Mammary epithelial cell (primary cell): ENCODE measurements at regions of chr1 and their contacts with region 1.

Region 1: DNA sequence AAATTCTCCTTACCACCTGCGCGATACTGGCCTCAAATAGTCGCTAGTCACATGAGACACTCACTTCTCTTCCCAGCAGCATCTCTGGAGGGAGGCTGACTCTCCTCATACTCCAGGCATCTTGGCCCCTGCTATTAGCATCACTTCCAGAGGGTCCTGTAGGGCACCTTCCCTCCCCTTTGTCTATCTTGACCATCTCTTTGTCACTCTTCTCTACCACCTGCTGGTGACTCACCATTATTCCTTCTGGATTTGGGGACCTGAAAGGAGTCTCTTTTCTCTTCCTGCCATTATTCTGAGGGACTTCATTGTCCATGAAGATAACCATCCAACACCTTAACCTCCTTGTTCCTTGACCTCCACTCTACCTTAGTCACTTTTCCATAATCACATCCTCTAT is 31.7 kb upstream of the GPR37L1 start:
- DNase-seq: no peak
- H3K4me3 ChIP-seq: no peak overlapping the region
- H3K27ac ChIP-seq: no peak overlapping the region
- H3K4me1 ChIP-seq: no peaks in the 10 kb centered on the region
- H3K27me3 ChIP-seq: no peaks in the 10 kb centered on the region
- CTCF ChIP-seq: peak in 1 of 2 donors; percentile 26

Region 2: GRCh38 chr1:202034683-202035462 is 56.1 kb before region 1 on chr1:
- CTCF ChIA-PET with region 1: no interaction called
- dilution Hi-C with region 1: no loop called
- in situ Hi-C with region 1: no loop called
- intact Hi-C with region 1: no loop called
- DNase-seq: peak; percentile 99
- H3K4me3 ChIP-seq: no peak overlapping the region
- H3K27ac ChIP-seq: peak overlapping the region; percentile 74
- H3K4me1 ChIP-seq: peaks cover 17% of the 10 kb centered on the region
- H3K27me3 ChIP-seq: no peaks in the 10 kb centered on the region
- CTCF ChIP-seq: no peak

Region 3: DNA sequence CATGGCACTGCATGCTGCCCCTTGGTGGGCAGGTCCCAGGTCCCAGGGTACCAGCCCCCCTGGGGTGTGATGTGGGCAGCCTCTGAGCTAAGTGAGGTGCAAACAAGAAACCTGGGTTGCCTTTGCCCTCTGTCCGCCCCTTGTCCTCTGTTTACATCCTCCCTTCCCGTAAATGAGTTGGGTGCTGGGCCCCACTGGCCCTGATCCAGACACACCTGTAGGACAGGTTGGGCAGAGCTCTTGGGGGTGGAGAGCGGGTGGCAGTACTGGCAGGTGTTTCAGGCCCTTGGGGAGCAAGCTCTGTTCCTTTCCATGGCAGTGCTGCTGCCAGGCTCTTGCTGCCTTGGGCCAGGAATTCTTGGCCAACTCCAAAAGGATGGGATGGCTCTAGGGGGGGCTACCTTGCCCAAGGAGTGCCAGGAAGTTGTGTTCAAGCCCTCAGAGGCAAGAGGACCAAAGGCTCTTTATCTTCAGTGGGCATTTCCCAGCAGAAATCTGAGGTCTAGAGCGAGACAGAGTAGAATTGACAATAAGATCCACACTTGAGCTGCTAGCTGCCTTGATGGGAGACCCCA is 44.7 kb before region 1 on chr1:
- CTCF ChIA-PET with region 1: no interaction called
- dilution Hi-C with region 1: no loop called
- in situ Hi-C with region 1: no loop called
- intact Hi-C with region 1: no loop called
- DNase-seq: peak; percentile 26
- H3K4me3 ChIP-seq: no peak overlapping the region
- H3K27ac ChIP-seq: peak overlapping the region; percentile 30
- H3K4me1 ChIP-seq: peaks cover 16% of the 10 kb centered on the region
- H3K27me3 ChIP-seq: no peaks in the 10 kb centered on the region
- CTCF ChIP-seq: no peak

Region 4: DNA sequence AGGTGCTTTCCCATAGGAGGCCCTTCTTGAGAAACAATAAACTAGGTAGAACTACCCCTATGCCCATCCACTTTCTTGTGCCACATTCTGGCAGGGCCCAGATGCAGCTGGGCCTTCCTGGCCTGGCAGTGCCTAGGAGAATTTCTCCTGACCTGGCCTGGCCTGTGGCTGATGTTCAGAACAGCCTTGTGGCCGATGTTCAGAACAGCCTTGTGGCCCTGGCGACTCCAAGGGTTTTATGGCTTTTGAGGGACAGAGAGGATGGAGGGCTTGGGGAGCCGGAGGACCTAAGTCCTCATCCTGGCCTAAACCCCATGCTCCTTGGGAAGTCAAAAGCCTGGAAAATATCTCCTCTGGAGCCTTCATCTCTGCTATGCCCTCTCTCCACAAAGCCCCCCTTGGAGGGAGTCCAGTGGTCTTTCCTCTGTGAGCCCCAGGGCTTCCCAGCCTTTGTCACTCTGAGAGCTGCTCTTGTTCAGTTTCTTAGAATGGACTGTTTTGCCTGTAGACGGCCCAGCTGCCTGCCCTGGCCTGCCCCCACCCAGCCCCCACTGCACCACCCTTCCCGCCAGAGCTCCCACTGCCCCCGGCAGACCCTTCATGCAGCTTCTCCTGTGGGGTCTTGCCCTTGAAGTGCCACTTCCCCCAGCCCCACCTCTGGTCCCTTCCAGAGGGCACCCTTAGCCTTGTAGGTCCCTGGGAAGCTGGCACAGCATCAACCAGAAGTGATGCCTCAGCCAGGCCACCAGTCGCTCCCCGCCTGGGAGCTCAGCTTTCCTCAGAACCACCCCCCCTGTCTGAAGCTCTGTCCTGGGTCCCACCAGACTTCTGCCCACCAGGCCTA is 38.7 kb after region 1 on chr1:
- CTCF ChIA-PET with region 1: no interaction called
- dilution Hi-C with region 1: loop called (anchors 5 kb)
- in situ Hi-C with region 1: no loop called
- intact Hi-C with region 1: no loop called
- DNase-seq: no peak
- H3K4me3 ChIP-seq: no peak overlapping the region
- H3K27ac ChIP-seq: no peak overlapping the region
- H3K4me1 ChIP-seq: peaks cover 17% of the 10 kb centered on the region
- H3K27me3 ChIP-seq: no peaks in the 10 kb centered on the region
- CTCF ChIP-seq: no peak